ENCODE measurements at regions of chr1 and their contacts with region 1.

Region 1: DNA sequence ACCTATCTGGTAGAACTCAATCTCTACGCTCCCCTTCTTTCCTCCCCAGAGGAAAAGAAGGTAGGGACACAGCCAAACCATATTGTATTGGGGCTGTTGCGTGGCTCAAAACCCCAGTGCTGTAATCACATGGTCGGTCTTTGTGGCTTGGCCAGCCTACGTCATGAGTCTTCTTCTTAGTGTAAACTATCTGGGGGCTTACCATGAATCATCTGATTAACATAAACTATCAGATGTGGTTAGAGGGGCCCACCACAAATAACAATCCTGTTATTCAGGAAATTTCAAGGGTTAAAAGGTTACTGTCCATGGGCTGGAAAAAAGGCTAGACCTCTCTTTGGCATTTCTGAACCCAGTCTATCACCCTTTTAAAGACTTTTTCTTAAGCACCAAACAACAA is 49.5 kb upstream of the GPR52 start:
- DNase-seq: no peak
- H3K4me3 ChIP-seq: no peak overlapping the region
- H3K27ac ChIP-seq: no peak overlapping the region
- H3K4me1 ChIP-seq: no peaks in the 10 kb centered on the region
- H3K27me3 ChIP-seq: no peaks in the 10 kb centered on the region
- CTCF ChIP-seq: no peak

Region 2: GRCh38 chr1:174051956-174052355 is 346.3 kb before region 1 on chr1:
- intact Hi-C with region 1: no loop called
- DNase-seq: no peak
- H3K4me3 ChIP-seq: no peak overlapping the region
- H3K27ac ChIP-seq: no peak overlapping the region
- H3K4me1 ChIP-seq: no peaks in the 10 kb centered on the region
- H3K27me3 ChIP-seq: no peaks in the 10 kb centered on the region
- CTCF ChIP-seq: no peak

Region 3: DNA sequence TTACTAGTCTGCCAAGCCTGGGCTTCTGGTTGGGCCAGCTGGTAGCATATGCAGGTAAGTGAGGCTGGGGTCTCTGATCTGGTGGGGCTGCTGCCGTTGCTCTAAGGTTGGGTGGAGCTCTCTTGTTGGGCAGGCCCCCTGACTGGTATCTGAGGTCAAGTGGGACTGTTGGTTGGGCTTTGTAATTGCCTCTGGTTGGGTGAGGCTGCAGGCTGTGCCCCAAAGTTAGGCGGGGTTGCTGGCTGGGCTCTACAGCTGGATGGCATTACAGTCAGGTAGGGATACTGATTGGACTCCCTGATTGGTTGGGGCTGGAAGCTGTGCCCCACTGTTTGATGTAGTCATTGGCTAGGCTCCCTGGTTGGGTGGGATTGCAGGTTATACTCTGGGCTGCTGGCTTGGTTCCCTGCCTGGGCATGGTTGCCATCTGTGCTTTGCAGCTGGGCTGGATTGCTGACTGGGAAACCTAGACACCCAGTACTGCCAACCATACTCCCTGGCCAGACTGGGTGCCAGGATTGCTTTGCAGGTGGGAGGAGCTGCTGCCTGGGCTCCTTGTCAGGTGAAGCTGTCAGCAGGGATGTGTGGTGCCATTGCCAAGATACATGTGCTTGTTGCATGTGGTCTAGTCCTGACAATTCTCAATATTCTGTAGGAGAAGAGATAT is 108.5 kb before region 1 on chr1:
- intact Hi-C with region 1: loop called (anchors 5 kb)
- DNase-seq: peak; percentile 51
- H3K4me3 ChIP-seq: no peak overlapping the region
- H3K27ac ChIP-seq: no peak overlapping the region
- H3K4me1 ChIP-seq: peaks cover 4% of the 10 kb centered on the region
- H3K27me3 ChIP-seq: no peaks in the 10 kb centered on the region
- CTCF ChIP-seq: no peak